Prostate gland (tissue), 2 donors: ENCODE measurements at regions of chr10 and their contacts with region 1.

Region 1: GRCh38 chr10:118698421-118698820 is 56.3 kb downstream of the CACUL1 start:
- DNase-seq: no peak
- H3K4me3 ChIP-seq: no peak overlapping the region
- H3K27ac ChIP-seq: no peak overlapping the region
- H3K4me1 ChIP-seq: no peaks in the 10 kb centered on the region
- H3K27me3 ChIP-seq: no peaks in the 10 kb centered on the region
- CTCF ChIP-seq: no peak
- POLR2A ChIP-seq: no peak

Region 2: DNA sequence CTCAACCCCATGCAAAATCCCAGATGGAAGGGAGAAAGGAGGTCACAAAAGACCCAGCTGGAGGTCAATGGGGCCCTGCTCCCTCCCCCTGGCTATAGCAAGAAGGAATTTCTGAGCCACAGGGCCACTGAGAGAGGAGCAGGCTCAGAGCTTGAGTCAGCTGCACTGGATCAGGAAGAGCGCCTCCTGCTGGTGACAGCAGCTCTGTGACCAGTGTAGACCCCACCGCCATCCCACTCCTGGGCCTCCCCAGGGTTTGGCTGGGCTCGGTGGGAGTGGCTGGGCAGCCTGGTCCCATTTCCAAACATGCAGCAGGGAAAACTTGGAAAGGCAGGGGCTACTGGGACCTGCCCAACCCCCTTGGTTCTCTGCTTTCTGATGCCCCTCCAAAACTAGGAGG is 71.5 kb before region 1 on chr10:
- intact Hi-C with region 1: loop called (anchors 10 kb)
- DNase-seq: no peak
- H3K4me3 ChIP-seq: no peak overlapping the region
- H3K27ac ChIP-seq: no peak overlapping the region
- H3K4me1 ChIP-seq: no peaks in the 10 kb centered on the region
- H3K27me3 ChIP-seq: no peaks in the 10 kb centered on the region
- CTCF ChIP-seq: no peak
- POLR2A ChIP-seq: no peak

Region 3: GRCh38 chr10:118754720-118755480 is 56.5 kb after region 1 on chr10 and contains the start of gene CACUL1:
- intact Hi-C with region 1: no loop called
- DNase-seq: peak; percentile 100
- H3K4me3 ChIP-seq: peak within 1 kb of the TSS; percentile 76 to 98
- H3K27ac ChIP-seq: peak within 1 kb of the TSS; percentile 88 to 90
- H3K4me1 ChIP-seq: peaks cover 4% of the 10 kb centered on the region
- H3K27me3 ChIP-seq: no peaks in the 10 kb centered on the region
- CTCF ChIP-seq: peak in 2 of 4 experiments; percentile 6 to 7
- POLR2A ChIP-seq: peak; percentile 89
- total RNA-seq, gene CACUL1: 23.7 to 38.1 TPM

Region 4: GRCh38 chr10:118850418-118851061 is 152.1 kb after region 1 on chr10:
- intact Hi-C with region 1: no loop called
- DNase-seq: peak; percentile 27
- H3K4me3 ChIP-seq: no peak overlapping the region
- H3K27ac ChIP-seq: no peak overlapping the region
- H3K4me1 ChIP-seq: no peaks in the 10 kb centered on the region
- H3K27me3 ChIP-seq: no peaks in the 10 kb centered on the region
- CTCF ChIP-seq: peak; percentile 20 to 45 (median 41)
- POLR2A ChIP-seq: no peak